ENCODE measurements at regions of chr7 and their contacts with region 1.

Region 1: GRCh38 chr7:132580717-132581285 is 4.5 kb upstream of the PLXNA4 start:
- DNase-seq: peak; percentile 73
- H3K4me3 ChIP-seq: no peak overlapping the region
- CTCF ChIP-seq: peak; percentile 67

Region 2: GRCh38 chr7:132162556-132163144 is 418.2 kb before region 1 on chr7:
- in situ Hi-C with region 1: no loop called
- DNase-seq: no peak
- H3K4me3 ChIP-seq: no peak overlapping the region
- CTCF ChIP-seq: no peak

Region 3: DNA sequence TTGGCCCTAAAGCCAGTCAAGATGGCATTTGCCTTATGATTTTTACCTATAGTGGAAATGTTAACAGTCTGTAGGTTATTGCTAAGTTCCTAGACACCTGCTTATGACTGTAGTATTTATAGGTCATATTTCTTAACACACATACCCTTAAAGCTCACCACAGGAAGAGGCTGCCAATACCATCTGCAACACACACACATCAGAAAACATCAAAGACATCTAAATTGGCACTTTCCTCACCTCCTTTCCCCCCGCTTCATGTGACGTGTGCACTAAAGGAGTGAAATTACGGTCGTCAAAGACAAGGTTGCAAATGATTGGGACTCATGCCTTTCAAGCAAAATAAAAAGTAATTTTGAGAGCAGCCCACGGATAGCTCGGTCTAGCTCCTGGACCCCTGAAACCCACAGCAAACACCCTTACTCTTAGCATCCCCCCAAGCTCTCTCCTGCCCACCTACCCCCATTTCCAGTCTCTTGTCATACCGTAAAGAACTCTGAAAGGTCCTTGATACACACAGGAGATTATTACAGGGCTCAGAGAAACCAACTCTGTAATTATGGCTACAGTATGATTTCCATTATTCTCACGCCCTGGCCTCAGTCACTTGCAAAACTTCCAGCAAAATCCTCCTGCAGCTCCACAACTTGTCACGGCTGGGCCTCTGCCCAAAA is 95.1 kb before region 1 on chr7:
- in situ Hi-C with region 1: no loop called
- DNase-seq: no peak
- H3K4me3 ChIP-seq: no peak overlapping the region
- CTCF ChIP-seq: no peak

Region 4: GRCh38 chr7:132548489-132549078 is 32.2 kb before region 1 on chr7:
- in situ Hi-C with region 1: no loop called
- DNase-seq: peak; percentile 67
- H3K4me3 ChIP-seq: no peak overlapping the region
- CTCF ChIP-seq: no peak

Region 5: GRCh38 chr7:132625651-132626050 is 44.9 kb after region 1 on chr7:
- in situ Hi-C with region 1: loop called (anchors 5 kb)
- DNase-seq: no peak
- H3K4me3 ChIP-seq: no peak overlapping the region
- CTCF ChIP-seq: no peak

Region 6: DNA sequence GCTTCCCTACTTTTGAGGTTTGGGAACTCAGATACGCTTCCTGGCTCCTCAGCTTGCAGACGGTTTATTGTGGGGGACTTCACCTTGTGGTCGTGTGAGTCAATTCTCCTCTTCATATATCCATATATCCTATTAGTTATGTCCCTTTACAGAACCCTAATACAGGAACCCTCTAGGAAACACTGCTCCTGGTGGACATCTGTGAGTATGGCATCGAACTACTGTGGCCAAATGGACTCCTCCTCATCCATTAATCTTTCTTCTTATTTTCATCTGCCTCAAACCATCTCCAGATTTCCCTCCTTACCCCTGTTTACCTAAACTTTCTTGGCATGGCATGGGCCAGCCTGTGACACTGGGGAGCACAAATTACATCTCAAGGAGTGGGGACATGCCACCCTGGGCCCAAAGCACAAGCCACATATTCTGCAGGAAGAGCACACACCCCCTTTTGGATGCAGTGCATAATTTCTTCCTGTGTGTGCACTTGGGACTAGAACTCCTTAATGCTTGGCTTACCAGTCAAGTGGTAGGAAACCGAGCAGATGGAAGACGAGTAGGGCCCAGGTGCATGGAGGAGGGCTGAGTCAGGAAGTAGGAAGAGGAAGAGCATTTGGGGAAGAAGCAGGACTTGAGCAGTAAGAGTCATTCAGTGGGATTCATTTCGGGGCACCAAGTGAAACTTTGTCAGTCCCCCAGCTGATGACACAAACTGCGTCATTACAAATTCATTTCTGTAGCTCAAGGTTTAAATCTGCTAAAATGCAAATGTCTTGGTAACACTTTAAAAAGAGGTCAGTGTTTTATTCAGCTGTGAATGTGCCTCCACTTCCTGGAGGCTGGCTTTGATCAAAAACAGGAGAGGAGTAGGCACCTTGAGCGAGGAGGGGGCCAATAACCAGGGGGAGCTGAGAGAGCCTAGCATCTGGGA is 76.3 kb after region 1 on chr7:
- in situ Hi-C with region 1: no loop called
- DNase-seq: no peak
- H3K4me3 ChIP-seq: no peak overlapping the region
- CTCF ChIP-seq: peak; percentile 59

Measured in astrocyte of the cerebellum (primary cell).